ENCODE measurements at regions of chr2 and their contacts with region 1.

Region 1: GRCh38 chr2:232592772-232593395 is 40.5 kb upstream of the EFHD1 start:
- DNase-seq: peak; percentile 66
- H3K4me3 ChIP-seq: no peak overlapping the region
- CTCF ChIP-seq: no peak

Region 2: DNA sequence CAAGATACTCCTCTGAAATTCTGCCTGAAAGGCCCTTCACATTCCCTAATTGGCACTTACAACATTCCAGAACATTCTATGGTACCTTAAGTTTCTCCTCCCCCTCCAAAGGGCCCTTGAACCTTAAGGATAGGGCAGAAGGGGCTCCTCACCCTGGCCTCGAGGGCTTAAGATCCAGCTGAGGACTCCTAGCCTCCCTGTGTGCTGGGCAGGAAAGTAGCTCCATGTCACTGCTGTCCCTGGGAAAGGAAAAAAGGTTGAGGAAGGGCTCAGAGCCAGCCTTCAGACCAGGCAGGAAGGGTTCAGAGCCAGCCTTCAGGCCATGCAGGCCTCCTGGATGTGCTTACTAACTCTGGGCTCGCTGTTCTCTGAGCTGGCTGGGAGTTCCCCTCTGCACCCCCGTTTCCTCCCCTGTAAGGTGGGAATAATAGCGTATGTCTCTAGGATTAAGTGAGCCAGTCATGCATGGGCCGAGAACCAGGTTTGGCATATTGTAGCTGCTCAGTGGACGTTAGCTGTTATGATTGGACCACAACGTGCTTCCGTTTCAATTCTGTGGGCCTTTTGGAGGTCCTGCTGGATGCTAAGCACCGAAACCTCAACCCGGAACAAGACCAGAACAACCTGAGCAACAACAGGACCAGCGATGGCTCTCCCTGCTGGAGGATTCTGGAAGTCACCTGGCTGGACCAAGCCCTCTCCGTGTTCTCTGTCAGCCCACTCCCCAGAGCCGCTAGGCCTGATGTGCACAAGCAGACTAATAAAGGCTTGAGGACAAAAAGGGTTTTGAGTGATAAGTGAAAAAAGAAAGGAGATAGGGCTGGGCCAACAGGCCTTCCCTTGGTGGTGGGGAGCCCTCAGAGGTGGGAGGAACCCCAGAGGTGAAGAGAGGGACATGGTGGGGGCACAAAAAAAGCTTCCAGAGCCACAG is 1198.4 kb before region 1 on chr2:
- in situ Hi-C with region 1: no loop called
- DNase-seq: no peak
- H3K4me3 ChIP-seq: no peak overlapping the region
- CTCF ChIP-seq: peak; percentile 31

Region 3: GRCh38 chr2:232647261-232647660 is 54.4 kb after region 1 on chr2:
- in situ Hi-C with region 1: no loop called
- DNase-seq: no peak
- H3K4me3 ChIP-seq: no peak overlapping the region
- CTCF ChIP-seq: no peak

Region 4: GRCh38 chr2:232672588-232672987 is 79.7 kb after region 1 on chr2:
- in situ Hi-C with region 1: loop called (anchors 5 kb)
- DNase-seq: no peak
- H3K4me3 ChIP-seq: no peak overlapping the region
- CTCF ChIP-seq: no peak

Measured in astrocyte of the cerebellum (primary cell).